Endothelial cell of umbilical vein (primary cell): ENCODE measurements at regions of chr7 and their contacts with region 1.

Region 1: GRCh38 chr7:22782616-22783232 is 39.9 kb downstream of the TOMM7 start:
- DNase-seq: peak; percentile 65
- H3K4me3 ChIP-seq: no peak overlapping the region
- H3K27ac ChIP-seq: no peak overlapping the region
- H3K4me1 ChIP-seq: no peaks in the 10 kb centered on the region
- H3K27me3 ChIP-seq: no peaks in the 10 kb centered on the region
- CTCF ChIP-seq: peak; percentile 94 to 95
- POLR2A ChIP-seq: no peak

Region 2: DNA sequence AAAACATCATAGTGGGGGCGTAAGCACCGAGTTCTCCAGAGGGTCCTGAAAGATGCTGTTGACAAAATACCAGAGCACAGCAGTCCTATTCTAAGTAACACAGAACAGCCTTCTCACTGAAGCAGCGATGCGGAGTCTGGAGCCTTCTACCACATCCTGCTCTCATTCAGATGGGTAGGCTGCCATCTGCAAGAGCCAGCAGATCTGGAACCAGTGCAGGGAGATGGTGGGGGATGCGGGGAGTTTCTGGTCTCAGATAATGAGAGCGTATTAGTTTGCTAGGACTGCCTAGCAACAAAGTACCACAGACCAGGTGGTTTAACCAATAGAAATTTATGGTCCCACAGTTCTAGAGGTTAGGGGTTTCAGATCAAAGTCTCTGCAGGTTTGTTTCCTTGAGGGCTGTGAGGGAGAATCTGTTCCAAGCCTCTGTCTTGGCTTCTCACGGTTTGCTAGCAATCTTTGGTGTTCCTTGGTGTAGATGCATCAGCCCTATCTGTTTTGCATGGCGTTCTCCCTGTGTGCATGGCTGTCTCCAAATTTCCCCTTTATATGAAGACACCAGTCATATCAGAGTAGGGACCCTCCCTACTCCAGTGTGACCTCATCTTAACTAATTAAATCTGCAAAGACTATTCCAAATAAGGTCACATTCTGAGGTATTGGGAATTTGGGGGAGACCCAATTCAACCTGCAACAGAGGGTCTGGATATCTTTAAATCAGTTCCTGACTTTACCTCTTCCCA is 230.8 kb before region 1 on chr7:
- CTCF ChIA-PET with region 1: interaction called, 21 read pairs
- POLR2A ChIA-PET with region 1: no interaction called
- dilution Hi-C with region 1: no loop called
- intact Hi-C with region 1: no loop called
- DNase-seq: no peak
- H3K4me3 ChIP-seq: no peak overlapping the region
- H3K27ac ChIP-seq: no peak overlapping the region
- H3K4me1 ChIP-seq: peaks cover 11% of the 10 kb centered on the region
- H3K27me3 ChIP-seq: peaks cover 27 to 28% of the 10 kb centered on the region in 2 experiments
- CTCF ChIP-seq: no peak
- POLR2A ChIP-seq: no peak

Region 3: DNA sequence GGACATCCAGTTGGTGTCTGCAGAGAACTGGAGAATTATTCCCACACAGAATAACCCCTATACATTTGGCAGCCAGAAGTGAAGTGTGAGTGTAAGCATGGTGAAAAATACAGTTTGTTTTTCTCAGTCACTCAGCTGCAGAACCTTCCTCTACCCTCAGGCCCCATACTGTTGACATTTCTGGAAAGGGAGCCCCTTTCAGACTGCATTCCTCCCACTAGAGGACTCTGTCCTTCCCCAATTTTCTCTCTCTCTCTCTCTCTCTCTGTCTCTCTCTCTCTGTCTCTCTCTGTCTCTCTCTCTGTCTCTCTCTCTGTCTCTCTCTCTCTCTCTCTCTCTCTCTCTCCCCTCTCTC is 196.0 kb before region 1 on chr7:
- CTCF ChIA-PET with region 1: interaction called, 14 read pairs
- POLR2A ChIA-PET with region 1: no interaction called
- dilution Hi-C with region 1: no loop called
- intact Hi-C with region 1: no loop called
- DNase-seq: no peak
- H3K4me3 ChIP-seq: no peak overlapping the region
- H3K27ac ChIP-seq: peak overlapping the region; percentile 95
- H3K4me1 ChIP-seq: peaks cover 75% of the 10 kb centered on the region
- H3K27me3 ChIP-seq: no peaks in the 10 kb centered on the region
- CTCF ChIP-seq: peak; percentile 34 to 56
- POLR2A ChIP-seq: no peak

Region 4: GRCh38 chr7:22758576-22758975 is 24.1 kb before region 1 on chr7:
- CTCF ChIA-PET with region 1: interaction called, 14 read pairs
- POLR2A ChIA-PET with region 1: no interaction called
- dilution Hi-C with region 1: no loop called
- intact Hi-C with region 1: no loop called
- DNase-seq: no peak
- H3K4me3 ChIP-seq: no peak overlapping the region
- H3K27ac ChIP-seq: no peak overlapping the region
- H3K4me1 ChIP-seq: no peaks in the 10 kb centered on the region
- H3K27me3 ChIP-seq: peaks cover 3 to 4% of the 10 kb centered on the region in 2 experiments
- CTCF ChIP-seq: no peak
- POLR2A ChIP-seq: no peak

Region 5: GRCh38 chr7:22809902-22810642 is 27.3 kb after region 1 on chr7:
- CTCF ChIA-PET with region 1: interaction called, 12 read pairs
- POLR2A ChIA-PET with region 1: no interaction called
- dilution Hi-C with region 1: no loop called
- intact Hi-C with region 1: no loop called
- DNase-seq: no peak
- H3K4me3 ChIP-seq: no peak overlapping the region
- H3K27ac ChIP-seq: no peak overlapping the region
- H3K4me1 ChIP-seq: no peaks in the 10 kb centered on the region
- H3K27me3 ChIP-seq: no peaks in the 10 kb centered on the region
- CTCF ChIP-seq: no peak
- POLR2A ChIP-seq: no peak

Region 6: GRCh38 chr7:23287612-23288011 is 504.9 kb after region 1 on chr7:
- CTCF ChIA-PET with region 1: no interaction called
- POLR2A ChIA-PET with region 1: no interaction called
- dilution Hi-C with region 1: no loop called
- intact Hi-C with region 1: no loop called
- DNase-seq: no peak
- H3K4me3 ChIP-seq: no peak overlapping the region
- H3K27ac ChIP-seq: no peak overlapping the region
- H3K4me1 ChIP-seq: no peaks in the 10 kb centered on the region
- H3K27me3 ChIP-seq: no peaks in the 10 kb centered on the region
- CTCF ChIP-seq: no peak
- POLR2A ChIP-seq: no peak